Thyroid gland (tissue), 4 donors: ENCODE measurements at regions of chr13 and their contacts with region 1.

Region 1: GRCh38 chr13:113296842-113297369 is at the start of gene LAMP1:
- DNase-seq: peak; percentile 96 to 99
- H3K4me3 ChIP-seq: peak within 1 kb of the TSS; percentile 25 to 93 (median 92)
- H3K27ac ChIP-seq: peak within 1 kb of the TSS; percentile 80 to 92 (median 81)
- H3K4me1 ChIP-seq: peaks cover 4 to 15% of the 10 kb centered on the region in 2 donors
- H3K27me3 ChIP-seq: no peaks in the 10 kb centered on the region
- CTCF ChIP-seq: peak in 1 of 6 experiments; percentile 33
- POLR2A ChIP-seq: peak; percentile 9 to 68
- total RNA-seq, gene LAMP1: 169 to 227 (median 206) TPM

Region 2: DNA sequence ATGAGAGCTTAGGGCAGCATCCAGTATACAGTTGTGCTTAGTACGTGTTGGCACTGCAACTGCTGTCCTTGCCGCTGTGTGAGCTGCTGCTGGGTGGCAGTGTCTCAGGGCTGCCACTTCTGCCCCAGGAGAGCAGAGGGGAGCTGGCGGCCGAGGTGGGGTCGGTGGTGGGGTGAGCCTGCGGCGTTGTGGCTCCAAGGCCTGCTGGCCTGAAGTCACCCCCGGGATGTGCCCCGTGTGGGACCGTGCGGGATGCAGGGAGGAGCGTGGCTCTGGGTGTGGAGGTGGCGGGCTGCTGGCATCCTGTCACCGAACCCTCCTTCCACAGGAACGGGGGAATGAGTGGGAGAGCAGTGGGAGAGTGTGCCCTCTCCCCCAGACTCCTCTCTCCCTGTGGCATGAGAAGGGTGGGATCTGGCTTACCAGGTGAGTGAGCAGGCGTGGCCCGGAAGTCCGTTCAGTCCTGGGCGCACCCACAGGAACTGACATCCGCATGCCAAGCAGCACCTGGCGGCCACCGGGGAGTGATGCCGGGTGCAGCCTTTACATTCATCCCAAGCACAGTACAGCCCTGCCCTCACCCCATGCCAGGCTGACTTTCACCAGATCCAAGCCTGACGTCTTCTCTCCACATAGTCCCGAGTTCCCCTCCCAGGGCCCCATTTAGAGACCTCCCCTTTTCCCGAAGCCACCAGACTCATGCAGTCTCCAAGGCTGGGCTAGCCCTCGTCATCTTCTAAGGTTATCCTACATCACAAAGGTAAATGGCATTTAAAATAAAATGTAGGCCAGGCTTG is 301.3 kb before region 1 on chr13:
- intact Hi-C with region 1: no loop called
- DNase-seq: no peak
- H3K4me3 ChIP-seq: no peak overlapping the region
- H3K27ac ChIP-seq: no peak overlapping the region
- H3K4me1 ChIP-seq: peaks cover 0 to 4% of the 10 kb centered on the region in 2 donors
- H3K27me3 ChIP-seq: no peaks in the 10 kb centered on the region
- CTCF ChIP-seq: no peak
- POLR2A ChIP-seq: no peak

Region 3: DNA sequence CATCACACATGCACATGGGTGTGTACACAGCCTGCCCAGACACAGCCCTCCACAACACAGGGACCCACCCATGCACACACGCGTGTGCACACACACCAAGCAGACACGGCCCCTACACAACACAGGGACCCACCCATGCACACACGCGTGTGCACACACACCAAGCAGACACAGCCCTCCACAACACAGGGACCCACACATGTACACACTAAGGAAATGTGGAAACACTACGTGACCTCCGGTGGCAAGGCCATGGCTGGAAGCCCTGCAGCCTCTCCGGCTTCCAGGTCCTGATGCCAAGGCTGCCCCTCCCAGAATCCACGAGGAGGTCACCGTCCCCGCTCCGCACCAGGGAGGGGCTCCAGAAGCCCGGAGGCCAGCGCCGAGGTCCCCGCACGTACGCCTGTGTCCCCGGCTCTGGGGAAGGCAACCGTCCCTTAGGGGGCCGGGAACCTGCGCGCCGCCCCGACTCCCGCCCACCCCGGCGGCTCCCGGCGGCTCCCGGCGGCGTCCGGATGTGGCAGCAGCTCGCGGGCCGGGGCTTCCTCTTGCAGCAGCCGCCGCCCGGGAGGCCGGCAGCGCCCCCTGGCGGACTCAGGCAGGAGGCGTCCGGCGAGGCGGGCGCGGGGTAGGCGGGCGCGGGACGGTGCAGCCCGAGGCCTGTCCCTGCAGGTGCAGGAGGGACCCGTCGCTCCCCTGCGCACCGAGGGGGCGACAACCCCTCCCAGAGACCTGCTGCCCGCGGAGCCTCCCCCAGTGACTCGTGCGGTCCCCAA is 96.8 kb after region 1 on chr13:
- intact Hi-C with region 1: loop called (anchors 10 kb)
- DNase-seq: peak; percentile 80 to 81
- H3K4me3 ChIP-seq: peak overlapping the region in 1 of 3 donors; percentile 58
- H3K27ac ChIP-seq: peak overlapping the region in 1 of 3 donors; percentile 28
- H3K4me1 ChIP-seq: peaks cover 0 to 13% of the 10 kb centered on the region in 2 donors
- H3K27me3 ChIP-seq: no peaks in the 10 kb centered on the region
- CTCF ChIP-seq: peak in 5 of 6 experiments; percentile 36 to 99 (median 89)
- POLR2A ChIP-seq: no peak